ENCODE measurements at regions of chr7 and their contacts with region 1.

Region 1: DNA sequence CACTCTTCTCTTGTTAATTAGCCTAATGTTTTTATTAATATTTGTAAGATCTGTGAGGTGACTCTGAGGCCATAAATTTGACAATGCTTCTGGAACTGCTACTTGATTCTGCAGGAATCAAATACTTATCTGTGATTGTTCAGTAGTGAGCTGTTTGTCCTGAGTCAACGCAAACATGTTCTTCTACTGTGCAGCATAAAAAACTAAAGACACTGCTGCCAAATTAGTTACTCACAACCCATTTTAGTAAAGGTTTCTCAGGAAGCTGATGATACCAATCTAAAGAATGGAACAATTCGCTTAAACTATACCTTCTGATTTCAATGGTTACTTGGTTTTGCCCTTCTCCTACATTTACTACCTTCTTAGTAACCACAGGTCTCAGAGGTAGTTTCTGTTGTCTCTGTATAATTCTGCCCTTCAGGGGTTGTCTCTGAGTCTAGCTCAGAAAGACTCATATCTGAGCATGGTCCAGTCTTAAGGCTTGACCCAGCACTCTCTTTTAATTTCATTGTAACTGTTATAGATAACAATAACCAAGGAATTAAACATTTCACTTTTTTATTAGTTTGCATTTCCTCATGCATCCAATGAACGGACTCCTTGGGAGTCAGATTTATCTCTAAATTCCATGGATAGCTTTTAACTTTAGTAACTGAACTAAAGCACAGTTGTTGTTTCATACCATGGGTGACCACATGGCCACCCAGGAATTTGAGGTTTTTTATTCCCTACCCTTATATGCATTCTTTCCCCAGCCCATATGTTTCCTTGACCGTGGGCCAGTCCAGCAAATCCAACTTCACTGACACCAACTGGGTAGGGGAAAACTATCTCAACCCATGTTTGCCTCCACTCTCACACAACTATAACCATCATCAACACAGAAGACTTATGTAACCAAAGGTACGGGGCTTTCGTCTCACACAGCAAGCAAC is 309.5 kb upstream of the TEX47 start:
- DNase-seq: no peak
- H3K4me3 ChIP-seq: no peak overlapping the region
- H3K27ac ChIP-seq: no peak overlapping the region
- H3K4me1 ChIP-seq: no peaks in the 10 kb centered on the region
- H3K27me3 ChIP-seq: no peaks in the 10 kb centered on the region
- CTCF ChIP-seq: no peak
- EP300 ChIP-seq: no peak
- POLR2A ChIP-seq: no peak

Region 2: GRCh38 chr7:90671571-90671970 is 1566.6 kb after region 1 on chr7:
- in situ Hi-C with region 1: no loop called
- intact Hi-C with region 1: loop called (anchors 5 kb)
- DNase-seq: no peak
- H3K4me3 ChIP-seq: no peak overlapping the region
- H3K27ac ChIP-seq: no peak overlapping the region
- H3K4me1 ChIP-seq: no peaks in the 10 kb centered on the region
- H3K27me3 ChIP-seq: no peaks in the 10 kb centered on the region
- CTCF ChIP-seq: no peak
- EP300 ChIP-seq: no peak
- POLR2A ChIP-seq: no peak

Measured in transverse colon (tissue), 4 donors.